Activated T-helper 1 cell treated with anti-CD3 and anti-CD28 coated beads, Interleukin-12 subunit alpha, Interleukin-12 subunit beta, Interleukin-2, Interleukin-4 antibody, amounts not matched to agents 30 ng/mL and 10 ng/mL and 1 ng/mL, durations not matched to agents 14 hours and 24 hours and 36 hours (primary cell): ENCODE measurements at regions of chr6 and their contacts with region 1.

Region 1: DNA sequence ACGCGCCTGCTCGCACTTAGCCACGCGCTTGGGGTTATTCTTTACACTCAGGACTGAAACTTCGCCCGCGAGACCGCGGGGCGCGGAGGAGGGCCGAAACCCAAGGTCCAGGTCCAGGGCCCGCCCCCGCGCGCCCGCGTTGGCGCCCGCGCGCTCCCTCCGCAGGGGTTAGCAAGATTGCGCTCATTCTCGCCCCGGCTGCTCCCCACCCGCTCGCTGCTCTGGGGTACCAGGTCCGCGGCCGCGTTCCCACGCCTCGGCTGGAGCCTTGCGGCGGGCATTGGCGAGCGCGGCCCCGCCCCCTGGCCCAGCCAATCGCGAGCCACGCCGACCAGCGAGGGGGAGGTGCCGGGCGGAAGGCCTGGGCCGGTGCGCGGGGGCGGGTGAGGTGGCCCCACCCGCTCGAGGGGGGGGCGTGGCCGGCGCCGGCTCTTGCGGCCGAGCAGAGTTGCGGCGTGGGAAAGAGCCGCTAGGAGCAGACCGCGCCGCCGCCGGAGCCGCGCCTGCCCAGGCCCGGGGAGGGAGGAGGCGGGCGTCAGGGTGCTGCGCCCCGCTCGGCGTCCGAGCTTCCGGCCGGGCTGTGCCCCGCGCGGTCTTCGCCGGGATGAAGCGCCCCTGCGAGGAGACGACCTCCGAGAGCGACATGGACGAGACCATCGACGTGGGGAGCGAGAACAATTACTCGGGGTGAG is at the start of gene HEY2:
- DNase-seq: peak; percentile 83
- H3K4me3 Mint-ChIP-seq: peak within 1 kb of the TSS; percentile 83
- H3K27ac Mint-ChIP-seq: peak within 1 kb of the TSS; percentile 49
- H3K4me1 Mint-ChIP-seq: peaks cover 45% of the 10 kb centered on the region
- H3K27me3 Mint-ChIP-seq: peaks cover 67% of the 10 kb centered on the region
- total RNA-seq, gene HEY2: not detected in 2 replicates

Region 2: GRCh38 chr6:125153391-125154117 is 595.8 kb before region 1 on chr6 and contains the start of gene TPD52L1:
- intact Hi-C with region 1: loop called (anchors 5 kb)
- DNase-seq: peak; percentile 31
- H3K4me3 Mint-ChIP-seq: peak within 1 kb of the TSS; percentile 74
- H3K27ac Mint-ChIP-seq: no peak within 1 kb of the TSS
- H3K4me1 Mint-ChIP-seq: no peaks in the 10 kb centered on the region
- H3K27me3 Mint-ChIP-seq: peaks cover 43% of the 10 kb centered on the region
- total RNA-seq, gene TPD52L1: 0.29 TPM in 1 of 2 replicates, not detected in the other

Region 3: GRCh38 chr6:125301435-125302391 is 447.6 kb before region 1 on chr6 and contains the start of gene HDDC2:
- intact Hi-C with region 1: loop called (anchors 1 kb)
- DNase-seq: peak; percentile 50
- H3K4me3 Mint-ChIP-seq: peak within 1 kb of the TSS; percentile 97
- H3K27ac Mint-ChIP-seq: peak within 1 kb of the TSS; percentile 92
- H3K4me1 Mint-ChIP-seq: peaks cover 52% of the 10 kb centered on the region
- H3K27me3 Mint-ChIP-seq: peaks cover 13% of the 10 kb centered on the region
- total RNA-seq, gene HDDC2: 79.7 and 82.4 TPM in 2 replicates

Region 4: GRCh38 chr6:125717120-125717744 is 32.1 kb before region 1 on chr6:
- intact Hi-C with region 1: no loop called
- DNase-seq: no peak
- H3K4me3 Mint-ChIP-seq: no peak overlapping the region
- H3K27ac Mint-ChIP-seq: no peak overlapping the region
- H3K4me1 Mint-ChIP-seq: peaks cover 8% of the 10 kb centered on the region
- H3K27me3 Mint-ChIP-seq: peaks cover 7% of the 10 kb centered on the region

Region 5: DNA sequence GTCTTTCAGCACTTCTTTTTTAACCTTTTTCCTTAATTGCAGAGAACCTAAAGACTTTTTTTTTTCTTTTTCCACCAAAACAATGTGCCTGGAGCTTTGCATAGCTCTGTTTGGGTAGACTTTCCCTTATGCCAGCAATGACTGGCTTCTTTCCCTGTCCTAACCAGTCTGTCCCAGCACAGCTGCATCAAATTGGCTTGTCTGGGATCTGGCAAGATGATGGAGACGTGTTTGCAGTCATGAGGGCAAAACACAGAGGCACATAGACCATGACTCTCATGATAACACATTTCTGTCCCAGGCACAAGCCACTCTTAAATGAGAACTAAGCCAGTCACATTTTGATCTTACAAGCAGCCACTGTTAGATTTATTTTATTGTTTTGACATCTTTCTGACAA is 16.6 kb after region 1 on chr6:
- intact Hi-C with region 1: loop called (anchors 2 kb)
- DNase-seq: no peak
- H3K4me3 Mint-ChIP-seq: no peak overlapping the region
- H3K27ac Mint-ChIP-seq: no peak overlapping the region
- H3K4me1 Mint-ChIP-seq: no peaks in the 10 kb centered on the region
- H3K27me3 Mint-ChIP-seq: peaks cover 50% of the 10 kb centered on the region

Region 6: DNA sequence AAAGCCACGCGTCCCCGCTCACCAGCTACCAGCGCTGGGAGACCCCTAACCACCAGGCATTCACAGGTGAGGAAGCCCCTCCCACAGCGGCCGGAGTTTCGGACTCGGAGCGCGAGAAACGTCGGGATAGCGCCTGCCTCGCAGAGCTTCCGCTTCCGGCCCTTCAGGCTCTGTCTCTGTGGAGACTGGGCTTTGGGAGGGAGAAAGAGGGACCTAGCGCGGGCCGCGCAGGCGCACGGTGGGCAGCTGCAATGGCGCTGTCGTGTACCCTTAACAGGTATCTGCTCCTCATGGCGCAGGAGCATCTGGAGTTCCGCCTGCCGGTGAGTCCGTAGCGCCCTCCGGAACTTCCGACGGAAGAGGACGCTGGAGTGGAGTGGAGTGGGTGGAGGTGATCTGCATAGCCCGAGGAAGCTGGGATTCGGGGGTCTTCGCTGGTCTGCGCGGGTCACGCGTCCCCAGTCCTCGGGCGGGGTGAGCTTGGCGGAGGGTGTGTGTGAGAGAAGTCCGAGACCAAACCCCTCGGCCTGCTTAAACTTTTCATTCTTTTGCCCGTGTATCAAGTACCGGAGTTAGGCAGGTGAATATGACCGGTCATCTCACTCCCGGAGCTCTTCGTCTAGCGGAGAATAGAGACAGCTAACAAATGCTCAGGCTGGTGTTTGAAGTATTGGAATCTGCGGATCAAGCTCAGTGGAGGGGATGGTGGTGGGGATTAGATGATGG is 237.1 kb after region 1 on chr6 and contains the start of gene TRMT11:
- intact Hi-C with region 1: loop called (anchors 1 kb)
- DNase-seq: peak; percentile 72
- H3K4me3 Mint-ChIP-seq: no peak within 1 kb of the TSS
- H3K27ac Mint-ChIP-seq: no peak within 1 kb of the TSS
- H3K4me1 Mint-ChIP-seq: peaks cover 8% of the 10 kb centered on the region
- H3K27me3 Mint-ChIP-seq: no peaks in the 10 kb centered on the region
- total RNA-seq, gene TRMT11: 27.9 and 29.1 TPM in 2 replicates

Region 7: GRCh38 chr6:126054258-126054702 is 305.0 kb after region 1 on chr6:
- intact Hi-C with region 1: no loop called
- DNase-seq: no peak
- H3K4me3 Mint-ChIP-seq: no peak overlapping the region
- H3K27ac Mint-ChIP-seq: no peak overlapping the region
- H3K4me1 Mint-ChIP-seq: no peaks in the 10 kb centered on the region
- H3K27me3 Mint-ChIP-seq: no peaks in the 10 kb centered on the region

Region 8: DNA sequence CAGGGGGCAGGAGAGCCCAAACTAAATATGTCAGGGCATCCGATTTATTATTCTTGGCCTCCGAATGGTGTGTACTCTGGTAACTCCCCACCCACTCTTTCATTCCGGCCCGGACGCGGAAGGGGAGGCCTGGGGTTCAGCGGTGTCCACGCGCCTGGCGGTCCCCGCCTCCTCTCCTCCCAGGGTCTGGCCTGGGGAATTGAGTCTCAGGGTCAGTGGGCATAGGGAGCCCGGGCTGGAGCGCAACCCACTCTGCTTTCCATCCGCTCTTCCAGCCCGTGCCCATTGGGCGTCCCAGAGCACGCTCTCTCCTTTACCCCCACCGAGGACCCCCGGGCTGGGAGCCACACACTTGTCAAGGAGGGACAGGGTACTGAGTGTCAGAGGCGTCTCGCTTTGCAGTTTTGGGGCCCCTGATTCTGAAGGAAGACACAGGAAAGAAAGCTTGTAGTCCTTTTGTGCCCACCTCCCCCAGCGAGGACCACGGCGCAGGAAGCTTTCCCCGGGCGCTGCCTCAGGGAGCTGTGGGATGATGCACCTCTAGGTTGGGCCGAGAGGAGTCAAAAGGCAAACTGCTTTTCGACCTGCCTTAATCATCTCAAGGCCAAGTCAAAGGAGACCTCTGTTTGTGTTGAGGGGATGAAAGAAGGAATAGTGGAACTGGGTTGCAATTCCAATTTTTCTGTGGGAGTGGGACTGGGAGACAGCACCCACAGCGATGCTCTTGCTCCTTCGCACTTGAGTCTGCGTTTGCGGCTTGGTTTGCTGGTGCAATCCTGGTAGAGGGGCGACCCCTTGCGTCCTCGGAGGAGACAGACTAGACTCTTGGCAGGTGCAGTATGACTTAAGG is 1371.7 kb after region 1 on chr6:
- intact Hi-C with region 1: loop called (anchors 5 kb)
- DNase-seq: peak; percentile 45
- H3K4me3 Mint-ChIP-seq: no peak overlapping the region
- H3K27ac Mint-ChIP-seq: no peak overlapping the region
- H3K4me1 Mint-ChIP-seq: peaks cover 12% of the 10 kb centered on the region
- H3K27me3 Mint-ChIP-seq: peaks cover 65% of the 10 kb centered on the region